HepG2 (cell line): ENCODE measurements at regions of chr6 and their contacts with region 1.

Region 1: DNA sequence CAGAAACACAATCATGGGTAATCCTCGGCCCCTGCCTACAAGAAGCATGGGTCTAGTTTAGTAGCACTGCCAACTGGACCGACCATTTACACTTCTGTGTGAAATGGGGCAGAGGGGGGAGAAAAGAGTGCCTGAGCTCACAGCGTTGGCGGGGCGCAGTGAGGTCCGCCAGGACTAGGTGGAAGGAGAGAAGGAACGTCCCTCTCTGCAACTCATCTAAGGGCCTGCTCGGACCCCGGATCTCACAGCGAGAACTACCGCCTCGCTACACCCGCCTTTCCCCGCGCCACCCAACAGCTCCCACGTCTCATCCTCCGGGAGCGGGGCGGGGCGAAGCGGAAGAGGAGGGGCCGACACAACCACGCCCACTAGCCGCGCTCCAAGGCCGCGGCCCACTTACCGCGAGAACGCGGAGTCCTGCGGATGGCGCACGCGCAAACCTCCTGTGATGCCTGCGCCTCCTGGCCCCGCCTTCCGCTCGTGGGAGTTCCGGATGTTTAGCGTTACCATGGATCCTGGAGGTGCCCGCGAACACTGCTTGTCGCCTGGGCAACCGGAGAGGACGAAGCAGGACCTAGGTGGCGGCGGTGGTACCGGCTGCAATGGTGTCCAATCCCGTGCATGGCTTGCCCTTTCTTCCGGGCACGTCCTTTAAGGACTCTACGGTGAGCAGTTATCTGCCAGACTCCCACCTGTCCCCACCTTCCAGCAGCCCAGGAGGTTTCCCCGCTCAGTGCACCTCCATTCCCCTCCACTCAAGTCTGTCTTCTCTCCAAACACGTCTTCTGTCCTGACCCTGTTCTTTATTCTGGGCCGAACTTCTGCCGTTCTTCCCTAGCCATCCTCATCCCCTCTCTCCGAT is at the start of gene EFHC1:
- DNase-seq: peak; percentile 98
- ATAC-seq: peak; percentile 96
- H3K4me3 ChIP-seq: peak within 1 kb of the TSS; percentile 78 to 99 (median 90)
- H3K27ac ChIP-seq: peak within 1 kb of the TSS; percentile 91
- H3K4me1 ChIP-seq: peaks cover 62% of the 10 kb centered on the region
- H3K27me3 ChIP-seq: peaks cover 0 to 4% of the 10 kb centered on the region in 2 experiments; a peak in 1 of 5 replicates
- CTCF ChIP-seq: peak; percentile 33
- EP300 ChIP-seq: no peak; a peak in 1 of 4 replicates
- POLR2A ChIP-seq: peak; percentile 97 to 98
- RAD21 ChIP-seq: peak; percentile 72
- total RNA-seq, gene EFHC1: 18.6 and 23.4 TPM in 2 replicates

Region 2: GRCh38 chr6:52503848-52504781 is 84.1 kb after region 1 on chr6:
- CTCF ChIA-PET with region 1: no interaction called
- POLR2A ChIA-PET with region 1: no interaction called
- in situ Hi-C with region 1: no loop called
- intact Hi-C with region 1: loop called (anchors 5 kb)
- DNase-seq: no peak
- ATAC-seq: peak; percentile 8
- H3K4me3 ChIP-seq: no peak overlapping the region
- H3K27ac ChIP-seq: no peak overlapping the region
- H3K4me1 ChIP-seq: peaks cover 25% of the 10 kb centered on the region
- H3K27me3 ChIP-seq: no peaks in the 10 kb centered on the region
- CTCF ChIP-seq: no peak
- EP300 ChIP-seq: no peak
- POLR2A ChIP-seq: no peak
- RAD21 ChIP-seq: no peak

Region 3: DNA sequence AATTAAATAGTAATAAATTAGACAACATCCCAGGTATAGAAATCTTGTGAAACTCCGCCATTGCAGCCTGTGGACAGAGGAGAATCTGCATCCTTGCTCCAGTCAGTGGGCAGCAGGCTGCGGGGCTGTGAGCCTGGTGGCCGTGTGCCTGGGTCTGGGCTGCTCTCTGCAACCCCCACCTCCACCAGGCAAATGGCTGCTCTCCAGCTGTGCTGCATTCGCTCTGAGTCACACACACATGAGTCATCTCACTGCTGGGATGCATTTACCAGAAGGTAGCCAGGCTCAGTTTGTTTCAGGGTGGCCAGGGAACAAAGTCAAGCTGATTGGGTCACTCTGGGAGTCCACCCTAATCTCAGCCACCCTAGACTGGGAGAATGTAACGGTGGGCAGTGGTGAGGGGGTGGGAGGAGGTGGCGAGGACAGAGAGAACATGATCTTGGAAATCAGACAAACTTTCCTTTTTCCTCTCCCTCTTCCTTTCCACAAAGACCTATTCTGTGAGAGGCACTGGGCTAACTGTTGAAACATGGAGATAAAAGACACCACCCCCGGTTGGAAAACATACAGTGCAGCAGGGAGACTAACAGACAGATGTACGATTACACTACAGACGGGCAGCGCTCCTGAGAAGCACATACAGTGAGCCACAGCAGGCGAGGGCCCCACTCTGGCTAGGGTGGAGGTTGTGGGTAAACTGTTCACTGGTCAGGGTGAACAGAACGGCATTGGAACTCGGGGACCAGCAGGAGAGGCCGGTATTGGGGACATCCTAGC is 97.7 kb after region 1 on chr6:
- CTCF ChIA-PET with region 1: no interaction called
- POLR2A ChIA-PET with region 1: interaction called, 4 read pairs
- in situ Hi-C with region 1: no loop called
- intact Hi-C with region 1: loop called (anchors 2 kb)
- DNase-seq: peak; percentile 92
- ATAC-seq: peak; percentile 92
- H3K4me3 ChIP-seq: peak overlapping the region; percentile 10 to 52 (median 26); a peak in 5 of 6 replicates
- H3K27ac ChIP-seq: peak overlapping the region; percentile 73
- H3K4me1 ChIP-seq: peaks cover 74% of the 10 kb centered on the region
- H3K27me3 ChIP-seq: no peaks in the 10 kb centered on the region
- CTCF ChIP-seq: peak; percentile 26; the same call in 1 of the 2 replicates
- EP300 ChIP-seq: peak in 1 of 2 experiments; percentile 64; a peak in 2 of 4 replicates
- POLR2A ChIP-seq: peak; percentile 40 to 44; a peak in 1 of 4 replicates
- RAD21 ChIP-seq: no peak

Region 4: DNA sequence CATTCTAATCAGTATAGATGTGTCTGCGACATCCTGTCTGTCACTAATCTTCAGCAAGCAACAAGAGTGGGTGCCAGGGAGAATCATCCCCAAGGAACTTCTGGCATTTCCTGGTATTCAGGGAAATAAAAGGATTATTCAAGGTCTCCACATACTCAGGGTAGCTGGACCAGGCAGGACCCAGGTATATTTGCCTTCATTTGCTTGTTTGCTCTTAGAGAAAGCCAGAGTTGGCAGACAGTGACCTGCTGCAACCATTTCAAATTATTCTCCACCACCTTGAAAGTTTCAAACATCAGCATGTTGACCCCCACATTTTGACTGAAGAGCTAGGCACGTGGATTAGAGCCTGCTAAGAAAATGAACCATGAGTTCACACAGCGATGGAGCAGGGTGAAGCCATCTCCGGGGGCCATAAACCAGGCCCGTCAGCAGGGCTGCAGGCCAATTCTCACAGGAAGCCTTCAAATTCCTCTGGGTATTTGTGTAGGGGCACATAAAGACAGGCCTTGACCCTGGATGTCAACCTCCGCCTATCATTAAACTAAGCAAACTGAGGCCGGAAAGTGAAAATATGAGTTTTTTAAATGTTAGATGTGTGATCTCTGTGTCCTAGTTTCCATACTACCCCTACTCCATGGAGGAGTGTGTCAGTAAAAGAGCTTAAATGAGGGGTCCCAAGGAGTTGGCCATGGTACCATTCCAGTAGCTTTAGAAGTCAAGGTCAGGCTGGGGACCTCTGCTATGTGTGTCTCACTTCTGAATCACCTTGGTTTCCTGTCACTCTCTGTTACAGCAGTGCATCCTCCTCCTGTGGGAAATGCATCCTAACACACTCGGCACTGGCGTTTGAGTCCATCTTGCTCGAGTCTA is 123.9 kb after region 1 on chr6:
- CTCF ChIA-PET with region 1: no interaction called
- POLR2A ChIA-PET with region 1: interaction called, 20 read pairs
- in situ Hi-C with region 1: no loop called
- intact Hi-C with region 1: loop called (anchors 1 kb)
- DNase-seq: peak; percentile 87
- ATAC-seq: peak; percentile 66
- H3K4me3 ChIP-seq: peak overlapping the region; percentile 1 to 31 (median 30); a peak in 5 of 6 replicates
- H3K27ac ChIP-seq: peak overlapping the region; percentile 77
- H3K4me1 ChIP-seq: peaks cover 100% of the 10 kb centered on the region
- H3K27me3 ChIP-seq: no peaks in the 10 kb centered on the region
- CTCF ChIP-seq: no peak
- EP300 ChIP-seq: peak in 1 of 2 experiments; percentile 93; a peak in 2 of 4 replicates
- POLR2A ChIP-seq: 0 out of 4 replicates have a peak, but pooled peaks of 1 of the 2 experiments have one; percentile 24
- RAD21 ChIP-seq: no peak

Region 5: GRCh38 chr6:52590152-52590931 is 170.3 kb after region 1 on chr6:
- CTCF ChIA-PET with region 1: interaction called, 16 read pairs
- POLR2A ChIA-PET with region 1: interaction called, 38 read pairs
- in situ Hi-C with region 1: loop called (anchors 5 kb)
- intact Hi-C with region 1: loop called (anchors 1 kb)
- DNase-seq: peak; percentile 77
- ATAC-seq: peak; percentile 62
- H3K4me3 ChIP-seq: peak overlapping the region in 1 of 3 experiments; percentile 33; a peak in 2 of 6 replicates
- H3K27ac ChIP-seq: peak overlapping the region; percentile 93
- H3K4me1 ChIP-seq: peaks cover 71% of the 10 kb centered on the region
- H3K27me3 ChIP-seq: no peaks in the 10 kb centered on the region
- CTCF ChIP-seq: peak; percentile 86
- EP300 ChIP-seq: peak in 1 of 2 experiments; percentile 29; a peak in 2 of 4 replicates
- POLR2A ChIP-seq: no peak
- RAD21 ChIP-seq: peak; percentile 78

Region 6: GRCh38 chr6:52664186-52664990 is 244.3 kb after region 1 on chr6:
- CTCF ChIA-PET with region 1: interaction called, 79 read pairs
- POLR2A ChIA-PET with region 1: interaction called, 18 read pairs
- in situ Hi-C with region 1: loop called (anchors 5 kb)
- intact Hi-C with region 1: loop called (anchors 1 kb)
- DNase-seq: peak; percentile 97
- ATAC-seq: peak; percentile 96
- H3K4me3 ChIP-seq: peak overlapping the region; percentile 72 to 89 (median 89)
- H3K27ac ChIP-seq: peak overlapping the region; percentile 64
- H3K4me1 ChIP-seq: peaks cover 50% of the 10 kb centered on the region
- H3K27me3 ChIP-seq: no peaks in the 10 kb centered on the region; a peak in 1 of 5 replicates
- CTCF ChIP-seq: no peak
- EP300 ChIP-seq: no peak; a peak in 1 of 4 replicates
- POLR2A ChIP-seq: peak; percentile 96 to 98
- RAD21 ChIP-seq: peak; percentile 40